Activated CD4-positive, alpha-beta T cell treated with anti-CD3 and anti-CD28 coated beads for 36 hours (primary cell): ENCODE measurements at regions of chrX and their contacts with region 1.

Region 1: GRCh38 chrX:48021026-48021900 is 14.5 kb downstream of the SPACA5 start:
- DNase-seq: peak; percentile 84
- ATAC-seq: peak; percentile 57
- H3K4me3 Mint-ChIP-seq: peak overlapping the region; percentile 85
- H3K27ac Mint-ChIP-seq: peak overlapping the region; percentile 99
- H3K4me1 Mint-ChIP-seq: peaks cover 14% of the 10 kb centered on the region
- H3K27me3 Mint-ChIP-seq: no peaks in the 10 kb centered on the region

Region 2: GRCh38 chrX:47482512-47483309 is 538.6 kb before region 1 on chrX and contains the start of gene ZNF41:
- CTCF ChIA-PET with region 1: no interaction called
- POLR2A ChIA-PET with region 1: no interaction called
- intact Hi-C with region 1: loop called in 1 of 2 experiments (anchors 10 kb)
- DNase-seq: peak; percentile 86
- ATAC-seq: peak; percentile 90
- H3K4me3 Mint-ChIP-seq: peak within 1 kb of the TSS; percentile 97
- H3K27ac Mint-ChIP-seq: peak within 1 kb of the TSS; percentile 94
- H3K4me1 Mint-ChIP-seq: peaks cover 41% of the 10 kb centered on the region
- H3K27me3 Mint-ChIP-seq: no peaks in the 10 kb centered on the region
- total RNA-seq, gene ZNF41: 9.3 to 10.9 TPM

Region 3: GRCh38 chrX:47658684-47659515 is 362.4 kb before region 1 on chrX and contains the start of gene UXT:
- CTCF ChIA-PET with region 1: no interaction called
- POLR2A ChIA-PET with region 1: no interaction called
- intact Hi-C with region 1: loop called (anchors 2 to 10 kb)
- DNase-seq: peak; percentile 96
- ATAC-seq: peak; percentile 83
- H3K4me3 Mint-ChIP-seq: peak within 1 kb of the TSS; percentile 86
- H3K27ac Mint-ChIP-seq: peak within 1 kb of the TSS; percentile 94
- H3K4me1 Mint-ChIP-seq: peaks cover 52% of the 10 kb centered on the region
- H3K27me3 Mint-ChIP-seq: no peaks in the 10 kb centered on the region
- total RNA-seq, gene UXT: 195 to 210 TPM

Region 4: GRCh38 chrX:47836164-47837072 is 184.8 kb before region 1 on chrX and contains the start of gene ZNF81:
- CTCF ChIA-PET with region 1: interaction called, 10 read pairs
- POLR2A ChIA-PET with region 1: interaction called, 4 read pairs
- intact Hi-C with region 1: loop called (anchors 1 kb)
- DNase-seq: peak; percentile 93
- ATAC-seq: peak; percentile 92
- H3K4me3 Mint-ChIP-seq: peak within 1 kb of the TSS; percentile 95
- H3K27ac Mint-ChIP-seq: peak within 1 kb of the TSS; percentile 97
- H3K4me1 Mint-ChIP-seq: peaks cover 23% of the 10 kb centered on the region
- H3K27me3 Mint-ChIP-seq: no peaks in the 10 kb centered on the region
- total RNA-seq, gene ZNF81: 5.3 to 6.4 TPM

Region 5: GRCh38 chrX:47936224-47936939 is 84.9 kb before region 1 on chrX:
- CTCF ChIA-PET with region 1: no interaction called
- POLR2A ChIA-PET with region 1: no interaction called
- intact Hi-C with region 1: loop called in 1 of 2 experiments (anchors 5 kb)
- DNase-seq: peak; percentile 44
- ATAC-seq: peak; percentile 80
- H3K4me3 Mint-ChIP-seq: peak overlapping the region; percentile 51
- H3K27ac Mint-ChIP-seq: peak overlapping the region; percentile 18
- H3K4me1 Mint-ChIP-seq: peaks cover 8% of the 10 kb centered on the region
- H3K27me3 Mint-ChIP-seq: no peaks in the 10 kb centered on the region

Region 6: GRCh38 chrX:47991263-47992092 is 29.8 kb before region 1 on chrX:
- CTCF ChIA-PET with region 1: no interaction called
- POLR2A ChIA-PET with region 1: no interaction called
- intact Hi-C with region 1: loop called in 1 of 2 experiments (anchors 2 kb)
- DNase-seq: peak; percentile 11
- ATAC-seq: peak; percentile 71
- H3K4me3 Mint-ChIP-seq: no peak overlapping the region
- H3K27ac Mint-ChIP-seq: peak overlapping the region; percentile 84
- H3K4me1 Mint-ChIP-seq: peaks cover 40% of the 10 kb centered on the region
- H3K27me3 Mint-ChIP-seq: no peaks in the 10 kb centered on the region